ENCODE measurements at regions of chr17 and their contacts with region 1.

Region 1: GRCh38 chr17:81328978-81329919 is 34.1 kb upstream of the SLC38A10 start:
- DNase-seq: peak; percentile 93 to 99
- ATAC-seq: peak; percentile 80 to 90
- H3K4me3 ChIP-seq: peak overlapping the region; percentile 30
- H3K27ac ChIP-seq: peak overlapping the region; percentile 93 to 94
- H3K4me1 ChIP-seq: peaks cover 39% of the 10 kb centered on the region
- CTCF ChIP-seq: no peak
- EP300 ChIP-seq: peak; percentile 19 to 41; a peak in 1 of 5 replicates
- POLR2A ChIP-seq: peak; percentile 25
- RAD21 ChIP-seq: peak; percentile 24 to 40; a peak in 2 of 5 replicates

Region 2: GRCh38 chr17:81346090-81346907 is 17.1 kb after region 1 on chr17:
- CTCF ChIA-PET with region 1: interaction called, 4 read pairs
- POLR2A ChIA-PET with region 1: interaction called, 17 read pairs
- DNase-seq: peak; percentile 97 to 99
- ATAC-seq: peak; percentile 68 to 85
- H3K4me3 ChIP-seq: peak overlapping the region; percentile 72
- H3K27ac ChIP-seq: peak overlapping the region; percentile 92 to 94
- H3K4me1 ChIP-seq: peaks cover 27% of the 10 kb centered on the region
- CTCF ChIP-seq: no peak
- EP300 ChIP-seq: no peak
- POLR2A ChIP-seq: peak; percentile 78
- RAD21 ChIP-seq: peak in 1 of 2 experiments; percentile 11; a peak in 1 of 5 replicates

Region 3: DNA sequence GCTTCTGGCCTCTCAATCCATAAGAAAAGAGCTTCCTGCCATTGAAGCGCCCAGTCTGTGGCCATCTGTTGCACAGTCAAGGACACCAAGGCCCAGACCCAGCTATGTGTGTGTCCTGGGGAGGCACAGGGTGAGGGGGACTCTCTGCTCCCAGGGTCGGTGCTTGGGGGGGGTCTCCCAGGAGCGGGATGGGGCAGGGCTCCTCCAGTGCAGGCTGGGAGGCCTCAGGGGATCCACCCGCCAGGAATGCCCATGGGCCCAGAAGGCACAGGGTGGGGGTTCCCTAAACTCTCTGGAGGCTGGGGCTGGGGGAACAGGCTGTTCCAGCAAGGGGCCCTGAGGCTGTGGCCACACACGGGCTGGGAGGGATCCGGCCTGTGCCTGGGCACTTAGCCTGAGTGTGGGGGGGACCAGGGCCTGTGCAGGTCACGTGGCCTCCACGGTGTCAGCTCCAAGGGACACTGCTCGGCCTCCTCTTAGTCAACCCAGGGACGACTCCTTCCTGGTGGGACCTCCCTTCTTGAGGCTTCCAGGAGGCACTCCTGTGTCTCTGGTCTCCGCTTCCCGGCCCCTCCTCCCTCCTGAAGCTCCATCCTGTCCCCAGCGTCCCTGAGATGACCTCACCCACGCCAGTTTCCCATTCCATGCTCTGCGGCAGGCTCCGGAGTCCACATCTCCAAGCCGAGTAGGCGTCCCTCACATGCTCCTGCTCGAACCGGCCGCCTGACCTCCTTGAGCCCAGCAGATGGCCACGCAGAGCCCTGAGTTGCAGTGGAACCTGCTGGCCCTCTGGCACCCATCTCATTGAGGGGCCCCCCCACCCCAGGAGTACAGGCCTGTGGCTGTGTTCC is 42.9 kb after region 1 on chr17:
- CTCF ChIA-PET with region 1: interaction called, 15 read pairs
- POLR2A ChIA-PET with region 1: no interaction called
- DNase-seq: peak; percentile 73 to 77
- ATAC-seq: peak; percentile 91 to 95
- H3K4me3 ChIP-seq: no peak overlapping the region
- H3K27ac ChIP-seq: peak overlapping the region; percentile 19 to 36; a peak in 2 of 6 replicates
- H3K4me1 ChIP-seq: peaks cover 5% of the 10 kb centered on the region
- CTCF ChIP-seq: peak; percentile 55
- EP300 ChIP-seq: no peak
- POLR2A ChIP-seq: no peak
- RAD21 ChIP-seq: peak; percentile 69 to 71; a peak in 4 of 5 replicates

Measured in A549 (cell line).